Heart right ventricle (tissue), 16 donors: ENCODE measurements at regions of chr11 and their contacts with region 1.

Region 1: GRCh38 chr11:78659326-78660270 is 84.9 kb upstream of the NARS2 start:
- DNase-seq: no peak
- ATAC-seq: no peak
- H3K4me3 ChIP-seq: no peak overlapping the region
- H3K27ac ChIP-seq: no peak overlapping the region
- H3K4me1 ChIP-seq: no peaks in the 10 kb centered on the region
- H3K27me3 ChIP-seq: no peaks in the 10 kb centered on the region
- CTCF ChIP-seq: no peak

Region 2: DNA sequence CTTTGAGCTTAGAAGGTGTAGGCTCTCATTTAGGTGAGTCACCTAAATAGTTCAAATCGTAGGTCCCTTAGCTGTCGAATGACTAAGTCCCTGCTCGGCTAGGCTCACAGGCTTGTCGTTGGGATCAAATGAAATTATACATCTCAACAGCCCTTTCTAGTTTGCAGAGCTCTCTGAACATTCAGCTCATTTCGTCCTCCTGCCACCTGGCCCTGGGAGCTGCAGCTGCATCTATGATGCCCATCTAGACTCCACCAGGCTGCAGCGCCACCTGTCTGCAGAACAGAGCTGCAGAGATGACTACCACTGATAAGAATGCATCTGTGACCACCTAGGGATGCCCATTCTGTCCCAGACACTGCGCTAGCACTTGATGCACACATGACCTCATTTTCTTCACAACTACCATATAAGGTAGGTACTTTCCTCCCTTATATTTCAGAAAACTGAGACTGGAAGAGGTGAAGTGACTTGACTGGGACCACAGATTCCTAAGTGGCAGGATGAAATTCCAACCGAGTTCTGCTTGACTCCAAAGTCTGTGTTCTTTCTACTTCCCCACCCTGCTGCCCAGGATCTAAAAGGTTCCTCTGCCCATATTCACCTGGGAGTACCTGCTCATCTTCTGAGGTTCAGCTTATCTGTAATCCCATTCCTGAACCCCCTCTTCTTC is 56.2 kb after region 1 on chr11:
- intact Hi-C with region 1: loop called in 1 of 10 experiments (anchors 10 kb)
- DNase-seq: peak in 1 of 2 donors; percentile 23
- ATAC-seq: no peak
- H3K4me3 ChIP-seq: no peak overlapping the region
- H3K27ac ChIP-seq: no peak overlapping the region
- H3K4me1 ChIP-seq: peaks cover 0 to 5% (median 0%) of the 10 kb centered on the region in 9 donors
- H3K27me3 ChIP-seq: peaks cover 0 to 6% (median 0%) of the 10 kb centered on the region in 7 donors
- CTCF ChIP-seq: peak; percentile 9 to 64 (median 50)